ENCODE measurements at regions of chr17 and their contacts with region 1.

Region 1: GRCh38 chr17:42577532-42578281 is at the start of gene PSMC3IP:
- DNase-seq: peak; percentile 95 to 96 (median 95)
- H3K4me3 ChIP-seq: peak within 1 kb of the TSS; percentile 32 to 91 (median 77)
- H3K27ac ChIP-seq: peak within 1 kb of the TSS; percentile 89 to 94
- H3K4me1 ChIP-seq: peaks cover 2 to 32% (median 23%) of the 10 kb centered on the region in 4 experiments
- H3K27me3 ChIP-seq: no peaks in the 10 kb centered on the region

Region 2: DNA sequence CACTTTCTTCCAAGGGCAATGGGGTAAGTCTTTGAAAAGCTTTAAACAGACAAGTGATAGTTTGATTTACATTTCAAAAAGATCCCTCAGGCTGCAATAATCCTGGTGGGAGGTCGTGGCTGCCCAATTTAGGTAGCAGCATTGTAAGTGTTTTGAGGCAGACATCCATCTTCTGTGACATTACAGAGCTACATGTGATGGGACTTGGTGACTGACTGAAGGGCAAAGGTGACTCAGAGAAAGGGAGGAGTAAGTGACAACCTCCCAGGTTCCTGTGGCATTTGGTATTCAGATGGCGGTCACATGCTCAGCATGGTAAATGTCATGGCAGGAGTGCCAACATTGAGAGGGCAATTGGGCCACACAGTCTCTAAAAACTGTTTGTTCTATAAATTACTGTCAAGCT is 215.9 kb before region 1 on chr17:
- CTCF ChIA-PET with region 1: no interaction called
- POLR2A ChIA-PET with region 1: no interaction called
- DNase-seq: peak in 1 of 3 donors; percentile 38
- H3K4me3 ChIP-seq: no peak overlapping the region
- H3K27ac ChIP-seq: no peak overlapping the region
- H3K4me1 ChIP-seq: peaks cover 6 to 37% (median 20%) of the 10 kb centered on the region in 4 experiments
- H3K27me3 ChIP-seq: no peaks in the 10 kb centered on the region

Region 3: DNA sequence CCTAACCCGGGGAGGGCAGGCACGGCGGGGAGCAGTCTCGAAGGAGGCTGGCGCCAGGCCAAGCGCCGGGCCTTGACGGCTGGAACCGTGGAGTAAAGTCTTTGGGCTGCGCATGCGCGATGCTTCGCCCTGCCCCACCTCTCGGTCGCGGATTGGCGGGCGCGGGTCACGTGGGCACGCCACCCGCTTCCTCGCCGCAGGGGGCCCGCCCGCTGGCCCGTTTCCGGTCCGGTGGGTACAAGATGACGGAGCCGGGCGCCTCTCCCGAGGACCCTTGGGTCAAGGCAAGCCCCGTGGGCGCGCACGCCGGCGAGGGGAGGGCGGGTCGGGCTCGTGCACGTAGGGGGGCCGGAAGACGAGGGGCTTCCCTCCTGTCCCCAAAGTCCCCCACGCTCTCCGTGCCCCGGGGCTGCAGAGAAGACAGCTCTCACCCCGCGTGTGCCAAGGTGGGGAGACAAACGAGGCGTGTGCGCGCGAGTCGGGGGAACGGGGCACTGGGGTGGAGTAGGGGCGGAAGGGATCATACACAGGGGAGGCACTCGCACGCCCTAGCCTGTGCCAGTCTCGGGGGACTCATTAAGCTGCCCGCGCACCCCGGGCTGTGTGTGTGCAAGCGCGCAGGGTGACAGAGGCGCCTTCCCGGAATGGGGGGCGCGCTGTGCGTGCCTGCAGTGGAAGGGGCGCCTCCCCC is 10.7 kb before region 1 on chr17 and contains the start of gene MLX:
- CTCF ChIA-PET with region 1: interaction called, 11 read pairs
- POLR2A ChIA-PET with region 1: interaction called, 5 read pairs
- DNase-seq: peak; percentile 89 to 92 (median 91)
- H3K4me3 ChIP-seq: peak within 1 kb of the TSS; percentile 73 to 91 (median 79)
- H3K27ac ChIP-seq: peak within 1 kb of the TSS; percentile 72 to 84
- H3K4me1 ChIP-seq: peaks cover 4 to 49% (median 40%) of the 10 kb centered on the region in 4 experiments
- H3K27me3 ChIP-seq: no peaks in the 10 kb centered on the region

Region 4: DNA sequence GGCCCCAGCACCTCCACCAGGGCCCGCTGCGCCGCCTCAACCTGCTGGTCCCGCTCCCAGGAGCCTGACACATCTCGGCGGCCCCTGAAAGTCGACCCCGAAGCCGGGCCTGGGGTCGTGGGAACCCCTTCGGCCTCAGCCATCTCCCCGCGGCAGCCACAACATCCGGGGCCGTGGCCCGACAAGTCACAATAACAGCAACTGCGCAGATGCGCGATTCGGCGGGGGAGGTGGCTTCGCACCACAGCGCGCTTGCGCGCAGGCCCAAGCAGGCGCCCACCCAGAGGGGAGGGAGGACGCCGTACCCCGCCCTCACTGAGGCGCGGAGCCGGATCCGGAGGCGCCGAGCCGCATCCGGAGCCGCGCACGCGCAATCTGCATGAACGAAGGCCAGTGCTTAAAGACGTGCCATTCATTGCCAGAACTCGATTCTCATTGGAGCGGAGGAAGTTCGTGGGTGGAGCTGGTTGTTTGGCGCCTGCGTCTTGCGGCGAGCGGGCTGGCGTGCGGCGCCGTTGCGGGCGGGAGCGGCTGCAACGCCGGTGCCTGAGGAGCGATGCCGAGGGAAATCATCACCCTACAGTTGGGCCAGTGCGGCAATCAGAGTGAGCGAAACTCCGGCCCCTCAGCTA is 31.6 kb after region 1 on chr17 and contains the starts of genes RETREG3 and TUBG1:
- CTCF ChIA-PET with region 1: interaction called, 10 read pairs
- POLR2A ChIA-PET with region 1: interaction called, 14 read pairs
- DNase-seq: peak; percentile 98 to 99 (median 99)
- H3K4me3 ChIP-seq: peak within 1 kb of the TSS; percentile 94 to 100 (median 98)
- H3K27ac ChIP-seq: peak within 1 kb of the TSS; percentile 70 to 92
- H3K4me1 ChIP-seq: peaks cover 5 to 31% (median 19%) of the 10 kb centered on the region in 4 experiments
- H3K27me3 ChIP-seq: no peaks in the 10 kb centered on the region

Region 5: GRCh38 chr17:42677921-42678781 is 100.4 kb after region 1 on chr17:
- CTCF ChIA-PET with region 1: interaction called, 37 read pairs
- POLR2A ChIA-PET with region 1: interaction called, 3 read pairs
- DNase-seq: peak in 2 of 3 donors; percentile 79 to 85
- H3K4me3 ChIP-seq: peak overlapping the region; percentile 46 to 83 (median 74)
- H3K27ac ChIP-seq: peak overlapping the region in 1 of 2 experiments; percentile 79
- H3K4me1 ChIP-seq: peaks cover 6 to 89% (median 80%) of the 10 kb centered on the region in 4 experiments
- H3K27me3 ChIP-seq: peaks cover 1 to 59% (median 24%) of the 10 kb centered on the region in 5 experiments

Measured in common myeloid progenitor, CD34-positive (primary cell).